Right ventricle myocardium inferior (tissue), 1 donor: ENCODE measurements at regions of chr5 and their contacts with region 1.

Region 1: GRCh38 chr5:43484106-43484849 is 613 bp upstream of the TMEM267 start:
- DNase-seq: peak; percentile 87
- ATAC-seq: peak; percentile 72

Region 2: GRCh38 chr5:43120720-43121564 is 363.3 kb before region 1 on chr5 and contains the start of gene ZNF131:
- intact Hi-C with region 1: loop called (anchors 5 kb)
- DNase-seq: peak; percentile 99
- ATAC-seq: peak; percentile 98
- total RNA-seq, gene ZNF131: 14.6 TPM

Region 3: DNA sequence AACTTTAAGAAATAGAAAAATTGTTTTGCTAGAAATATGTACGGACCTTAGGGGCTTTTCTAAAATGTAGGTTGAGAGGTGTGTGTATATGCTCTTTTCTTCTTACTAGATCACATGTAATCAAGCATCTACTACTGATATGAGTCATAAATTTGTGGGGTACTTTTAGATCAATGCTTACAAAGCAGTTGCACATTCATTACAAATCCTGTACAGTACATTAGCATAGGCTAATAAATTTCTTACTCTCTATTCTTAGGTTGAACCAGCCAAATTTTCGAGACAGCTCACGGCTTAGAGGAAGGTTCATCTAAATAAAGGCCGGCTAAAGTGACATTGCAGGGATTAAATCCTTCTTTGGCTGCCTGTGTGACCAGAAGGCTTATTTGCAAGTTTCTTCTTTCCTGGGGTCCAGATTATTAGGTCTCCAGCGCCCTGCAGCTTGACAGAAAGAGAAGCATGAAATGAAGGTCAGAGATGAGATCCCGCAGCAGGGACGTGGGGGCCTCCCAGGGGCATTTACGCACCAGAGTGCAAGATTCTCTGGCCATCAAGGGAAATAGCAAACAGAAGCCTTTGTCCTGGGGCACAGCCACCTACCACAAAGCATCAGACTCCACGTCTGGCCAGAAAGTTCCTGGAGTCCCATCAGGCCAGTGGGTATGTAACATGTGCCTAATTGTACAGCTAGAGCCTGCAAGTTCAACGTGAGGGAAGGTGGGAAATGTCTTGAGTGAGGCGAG is 239.3 kb before region 1 on chr5:
- intact Hi-C with region 1: no loop called
- DNase-seq: no peak
- ATAC-seq: no peak

Region 4: GRCh38 chr5:43313035-43313853 is 171.0 kb before region 1 on chr5 and contains the start of gene HMGCS1:
- intact Hi-C with region 1: loop called (anchors 5 kb)
- DNase-seq: peak; percentile 98
- ATAC-seq: peak; percentile 99
- total RNA-seq, gene HMGCS1: 23.1 TPM

Region 5: GRCh38 chr5:43396762-43397304 is 87.4 kb before region 1 on chr5:
- intact Hi-C with region 1: no loop called
- DNase-seq: peak; percentile 75
- ATAC-seq: peak; percentile 69

Region 6: DNA sequence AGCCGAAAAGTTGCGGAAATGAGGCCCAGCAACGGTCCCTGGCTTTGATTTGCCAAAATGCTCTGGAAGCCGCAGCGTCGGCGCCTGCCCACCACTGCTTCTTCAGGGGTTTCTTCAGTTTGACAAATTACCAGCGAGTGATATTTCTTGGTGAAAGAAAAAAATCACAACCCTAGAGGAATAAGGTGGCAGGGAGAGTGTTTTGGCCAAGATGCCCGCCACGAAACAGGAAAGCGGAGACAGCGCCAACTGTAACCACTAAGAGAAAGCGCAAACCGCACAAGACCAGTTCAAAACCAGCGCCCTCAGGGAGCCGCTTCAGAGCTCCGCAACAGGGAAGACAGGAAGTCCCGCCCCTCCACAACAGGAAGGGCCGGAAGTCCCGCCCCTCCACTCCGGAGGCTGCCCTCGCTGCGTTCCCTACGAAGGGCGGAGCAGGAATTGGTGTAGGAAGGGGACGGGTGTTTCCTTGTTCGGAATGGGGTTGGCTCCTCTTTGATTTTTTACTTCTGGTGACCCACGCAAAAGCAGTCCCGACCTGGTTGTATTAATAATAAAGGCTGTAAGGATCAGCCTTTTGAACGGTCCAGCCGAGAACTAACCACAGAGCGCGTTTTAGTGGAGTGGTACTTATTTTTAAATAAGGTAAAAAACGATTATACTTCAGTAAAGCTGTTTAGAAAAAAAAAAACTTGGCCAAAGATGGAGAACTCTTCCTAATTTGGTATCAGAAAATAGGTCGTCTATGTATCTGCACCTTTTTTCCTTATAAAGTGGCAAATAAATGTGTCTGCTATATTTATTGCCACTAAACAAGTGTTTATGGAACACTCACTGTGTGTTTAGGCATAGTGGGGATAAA is 30.8 kb after region 1 on chr5 and contains the start of gene C5orf34:
- intact Hi-C with region 1: loop called (anchors 2 kb)
- DNase-seq: peak; percentile 98
- ATAC-seq: peak; percentile 100
- total RNA-seq, gene C5orf34: 0.73 TPM

Region 7: GRCh38 chr5:43556857-43557542 is 72.7 kb after region 1 on chr5 and contains the start of gene PAIP1:
- intact Hi-C with region 1: loop called (anchors 5 kb)
- DNase-seq: peak; percentile 91
- ATAC-seq: peak; percentile 92
- total RNA-seq, gene PAIP1: 130 TPM

Region 8: DNA sequence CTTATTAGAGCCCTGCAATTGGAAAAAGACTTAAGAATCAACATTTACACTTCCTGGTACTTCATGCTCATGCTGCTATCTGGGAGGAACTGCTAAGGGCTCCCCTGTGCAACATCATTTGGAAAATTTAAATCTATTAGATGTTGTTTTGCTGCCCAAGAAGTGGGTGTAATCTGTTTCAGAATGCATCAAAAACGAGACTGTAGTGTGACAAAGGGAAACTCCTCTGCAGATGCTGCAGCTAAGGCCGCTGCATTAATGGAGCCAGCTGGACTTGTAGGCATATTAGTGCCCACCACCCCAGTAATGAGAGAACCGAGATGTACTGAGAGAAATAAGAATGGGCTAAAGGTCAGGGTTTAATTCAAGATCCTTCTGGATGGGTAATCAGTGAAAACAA is 83.7 kb after region 1 on chr5:
- intact Hi-C with region 1: no loop called
- DNase-seq: no peak
- ATAC-seq: no peak

Region 9: GRCh38 chr5:43602461-43603343 is 118.4 kb after region 1 on chr5 and contains the start of gene NNT:
- intact Hi-C with region 1: loop called (anchors 5 kb)
- DNase-seq: peak; percentile 95
- ATAC-seq: peak; percentile 82
- total RNA-seq, gene NNT: 563 TPM